CD8-positive, alpha-beta memory T cell (primary cell): ENCODE measurements at regions of chr7 and their contacts with region 1.

Region 1: DNA sequence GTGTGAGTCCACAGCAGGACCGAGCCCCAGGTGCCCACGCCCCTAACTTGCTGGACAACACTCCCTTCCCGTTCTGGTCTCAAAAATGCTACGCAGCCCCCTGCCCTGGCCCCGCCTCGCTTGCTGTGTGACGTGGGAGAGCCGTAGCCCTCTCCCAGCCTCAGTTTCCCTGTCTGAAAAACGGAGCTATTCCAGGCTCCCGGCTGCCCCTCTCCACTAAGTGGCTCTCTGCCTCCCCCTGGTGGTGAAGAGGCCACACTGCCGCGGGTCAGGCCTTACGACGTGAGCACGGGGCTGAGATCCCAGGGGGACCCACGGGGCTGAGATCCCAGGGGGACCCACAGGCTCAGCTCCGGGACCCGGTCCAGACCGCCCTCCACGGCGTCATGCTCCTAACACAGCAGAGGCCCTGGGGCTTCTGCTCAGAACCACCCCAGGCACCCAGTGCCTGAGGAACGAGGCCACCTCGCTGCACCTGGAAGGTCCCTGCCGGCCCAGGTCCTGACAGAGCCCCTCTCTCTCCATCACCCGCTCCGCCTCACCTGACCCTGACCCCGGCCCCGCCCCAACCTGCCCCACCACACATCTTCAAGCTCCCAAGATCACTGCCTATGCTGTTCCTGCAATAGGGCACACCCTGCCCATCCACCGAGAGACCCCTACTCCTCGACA is 26.7 kb downstream of the MICALL2 start:
- DNase-seq: peak; percentile 61 to 83 (median 74)
- H3K4me3 ChIP-seq: no peak overlapping the region
- H3K4me3 Mint-ChIP-seq: peak overlapping the region in 3 of 7 donors; percentile 35 to 52 (median 48)
- H3K27ac ChIP-seq: no peak overlapping the region
- H3K27ac Mint-ChIP-seq: peak overlapping the region in 2 of 8 donors; percentile 64 to 73
- H3K4me1 ChIP-seq: peaks cover 5% of the 10 kb centered on the region
- H3K4me1 Mint-ChIP-seq: peaks cover 2 to 4% (median 4%) of the 10 kb centered on the region in 3 donors
- H3K27me3 ChIP-seq: no peaks in the 10 kb centered on the region
- H3K27me3 Mint-ChIP-seq: peaks cover 4% of the 10 kb centered on the region in 2 donors

Region 2: DNA sequence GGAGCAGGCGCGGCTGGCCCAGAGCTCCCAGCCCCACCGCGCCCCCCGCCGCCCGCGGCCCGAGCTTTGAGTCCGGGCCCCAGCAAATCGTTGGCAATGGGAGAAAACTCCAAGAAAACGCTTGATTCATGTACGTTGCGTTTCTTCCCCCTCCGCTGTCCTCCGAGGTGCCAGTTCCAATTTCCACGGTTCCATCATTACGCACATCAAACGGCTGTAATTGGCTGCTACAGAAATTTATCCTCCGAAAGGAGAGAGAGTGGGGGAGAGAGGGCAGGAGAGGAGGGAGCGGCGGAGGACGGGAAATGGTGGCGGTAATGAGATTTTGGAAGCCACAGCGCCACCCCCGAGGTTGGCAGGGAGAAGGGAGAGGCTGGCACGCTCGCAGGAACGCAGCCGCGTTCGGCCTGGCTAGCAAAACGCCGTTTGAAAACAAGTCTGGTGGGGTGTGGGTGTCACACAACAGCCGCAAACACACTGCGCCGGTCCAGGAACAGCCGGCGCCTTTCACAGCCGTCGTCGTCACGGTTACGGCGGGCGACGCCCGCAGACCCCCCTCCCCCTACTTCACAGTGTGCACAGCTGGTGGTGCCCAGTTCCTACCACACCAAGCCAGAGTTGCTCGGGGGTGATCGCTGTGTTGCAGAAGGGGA is 142.4 kb before region 1 on chr7:
- CTCF ChIA-PET with region 1: no interaction called
- POLR2A ChIA-PET with region 1: no interaction called
- DNase-seq: peak in 4 of 5 donors; percentile 16 to 45 (median 38)
- H3K4me3 ChIP-seq: peak overlapping the region; percentile 28
- H3K4me3 Mint-ChIP-seq: peak overlapping the region; percentile 3 to 90 (median 80)
- H3K27ac ChIP-seq: no peak overlapping the region
- H3K27ac Mint-ChIP-seq: peak overlapping the region in 2 of 8 donors; percentile 50 to 63
- H3K4me1 ChIP-seq: no peaks in the 10 kb centered on the region
- H3K4me1 Mint-ChIP-seq: peaks cover 7 to 10% (median 7%) of the 10 kb centered on the region in 3 donors
- H3K27me3 ChIP-seq: no peaks in the 10 kb centered on the region
- H3K27me3 Mint-ChIP-seq: peaks cover 12 to 28% of the 10 kb centered on the region in 2 donors

Region 3: DNA sequence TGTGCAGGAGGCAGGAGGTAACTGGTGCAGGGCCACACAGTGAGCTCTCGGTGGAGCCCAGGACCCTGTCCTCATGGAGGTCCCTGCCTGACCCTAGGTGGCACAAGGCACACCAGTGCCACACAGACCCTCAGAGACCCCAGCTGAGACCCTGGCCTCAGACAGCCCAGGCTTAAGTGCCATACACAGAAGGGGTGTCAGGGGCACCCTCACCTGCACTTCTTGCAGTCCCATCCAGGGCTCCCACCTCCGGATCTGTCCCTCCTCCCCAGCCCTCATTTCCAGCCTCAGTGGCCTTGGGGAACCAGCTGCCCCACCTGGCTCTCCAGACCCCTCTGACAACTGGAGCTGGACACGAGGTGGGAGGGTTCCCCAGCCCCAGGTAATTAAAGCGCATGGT is 16.0 kb before region 1 on chr7:
- CTCF ChIA-PET with region 1: interaction called, 14 read pairs
- POLR2A ChIA-PET with region 1: no interaction called
- DNase-seq: no peak
- H3K4me3 ChIP-seq: no peak overlapping the region
- H3K4me3 Mint-ChIP-seq: no peak overlapping the region
- H3K27ac ChIP-seq: no peak overlapping the region
- H3K27ac Mint-ChIP-seq: no peak overlapping the region
- H3K4me1 ChIP-seq: peaks cover 23% of the 10 kb centered on the region
- H3K4me1 Mint-ChIP-seq: peaks cover 25 to 30% (median 28%) of the 10 kb centered on the region in 3 donors
- H3K27me3 ChIP-seq: no peaks in the 10 kb centered on the region
- H3K27me3 Mint-ChIP-seq: no peaks in the 10 kb centered on the region

Region 4: GRCh38 chr7:1448958-1449357 is 16.4 kb after region 1 on chr7:
- CTCF ChIA-PET with region 1: no interaction called
- POLR2A ChIA-PET with region 1: no interaction called
- DNase-seq: no peak
- H3K4me3 ChIP-seq: no peak overlapping the region
- H3K4me3 Mint-ChIP-seq: no peak overlapping the region
- H3K27ac ChIP-seq: no peak overlapping the region
- H3K27ac Mint-ChIP-seq: no peak overlapping the region
- H3K4me1 ChIP-seq: no peaks in the 10 kb centered on the region
- H3K4me1 Mint-ChIP-seq: no peaks in the 10 kb centered on the region
- H3K27me3 ChIP-seq: no peaks in the 10 kb centered on the region
- H3K27me3 Mint-ChIP-seq: no peaks in the 10 kb centered on the region